Mammary epithelial cell (primary cell): ENCODE measurements at regions of chr10 and their contacts with region 1.

Region 1: GRCh38 chr10:49606981-49607535 is 3.1 kb upstream of the SLC18A3 start:
- DNase-seq: peak; percentile 54
- H3K4me3 ChIP-seq: no peak overlapping the region
- H3K27ac ChIP-seq: no peak overlapping the region
- H3K4me1 ChIP-seq: peaks cover 16% of the 10 kb centered on the region
- H3K27me3 ChIP-seq: peaks cover 40% of the 10 kb centered on the region
- CTCF ChIP-seq: no peak

Region 2: DNA sequence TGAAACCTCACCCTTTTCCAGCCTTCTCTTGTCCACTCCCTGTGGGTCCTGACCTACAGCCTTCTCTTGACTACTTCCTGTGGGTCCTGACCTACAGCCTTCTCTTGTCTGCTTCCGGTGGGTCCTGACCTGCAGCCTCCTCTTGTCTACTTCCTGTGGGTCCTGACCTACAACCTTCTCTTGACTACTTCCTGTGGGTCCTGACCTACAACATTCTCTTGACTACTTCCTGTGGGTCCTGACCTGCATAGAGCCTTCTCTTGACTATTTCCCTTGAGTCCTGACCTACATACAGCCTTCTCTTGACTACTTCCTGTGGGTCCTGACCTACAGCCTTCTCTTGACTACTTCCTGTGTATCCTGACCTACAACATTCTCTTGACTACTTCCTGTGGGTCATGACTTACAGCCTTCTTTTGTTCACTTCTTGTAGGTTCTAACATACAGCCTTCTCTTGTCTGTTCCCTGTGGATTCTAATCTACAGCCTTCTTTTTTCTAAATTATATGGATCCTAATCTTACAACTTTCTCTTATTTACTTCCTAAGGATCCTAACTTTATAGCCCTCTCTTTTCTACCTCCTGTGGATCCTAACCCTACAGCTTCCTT is 271.6 kb before region 1 on chr10:
- CTCF ChIA-PET with region 1: no interaction called
- dilution Hi-C with region 1: no loop called
- in situ Hi-C with region 1: no loop called
- intact Hi-C with region 1: no loop called
- DNase-seq: no peak
- H3K4me3 ChIP-seq: no peak overlapping the region
- H3K27ac ChIP-seq: no peak overlapping the region
- H3K4me1 ChIP-seq: no peaks in the 10 kb centered on the region
- H3K27me3 ChIP-seq: no peaks in the 10 kb centered on the region
- CTCF ChIP-seq: no peak

Region 3: GRCh38 chr10:49398000-49398861 is 208.8 kb before region 1 on chr10:
- CTCF ChIA-PET with region 1: no interaction called
- dilution Hi-C with region 1: no loop called
- in situ Hi-C with region 1: no loop called
- intact Hi-C with region 1: loop called (anchors 10 kb)
- DNase-seq: peak; percentile 57
- H3K4me3 ChIP-seq: peak overlapping the region in 2 of 3 experiments; percentile 28 to 30
- H3K27ac ChIP-seq: no peak overlapping the region
- H3K4me1 ChIP-seq: peaks cover 11% of the 10 kb centered on the region
- H3K27me3 ChIP-seq: peaks cover 69% of the 10 kb centered on the region
- CTCF ChIP-seq: no peak

Region 4: DNA sequence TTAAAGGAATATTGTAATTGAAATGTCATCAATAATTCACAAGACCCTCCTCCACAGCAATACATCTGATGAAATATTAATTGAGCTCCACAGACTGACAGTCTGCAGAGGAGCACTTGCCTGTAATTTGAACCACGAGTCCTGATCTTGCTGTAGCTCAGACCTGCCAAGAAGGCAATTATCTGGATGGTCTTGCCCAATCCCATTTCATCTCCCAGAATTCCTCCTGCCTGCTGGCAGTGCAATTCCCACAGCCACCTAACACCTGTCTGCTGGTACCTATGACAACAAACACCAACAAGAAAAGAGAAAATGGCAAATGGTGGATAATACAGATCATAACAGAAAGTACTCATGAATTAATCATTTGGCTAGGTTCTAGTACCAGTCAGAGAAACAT is 106.6 kb before region 1 on chr10:
- CTCF ChIA-PET with region 1: no interaction called
- dilution Hi-C with region 1: no loop called
- in situ Hi-C with region 1: no loop called
- intact Hi-C with region 1: no loop called
- DNase-seq: no peak
- H3K4me3 ChIP-seq: no peak overlapping the region
- H3K27ac ChIP-seq: no peak overlapping the region
- H3K4me1 ChIP-seq: no peaks in the 10 kb centered on the region
- H3K27me3 ChIP-seq: no peaks in the 10 kb centered on the region
- CTCF ChIP-seq: no peak

Region 5: GRCh38 chr10:49645417-49646255 is 38.6 kb after region 1 on chr10:
- CTCF ChIA-PET with region 1: no interaction called
- dilution Hi-C with region 1: no loop called
- in situ Hi-C with region 1: no loop called
- intact Hi-C with region 1: no loop called
- DNase-seq: no peak
- H3K4me3 ChIP-seq: no peak overlapping the region
- H3K27ac ChIP-seq: no peak overlapping the region
- H3K4me1 ChIP-seq: no peaks in the 10 kb centered on the region
- H3K27me3 ChIP-seq: peaks cover 6% of the 10 kb centered on the region
- CTCF ChIP-seq: no peak

Region 6: GRCh38 chr10:49679480-49679893 is 72.4 kb after region 1 on chr10 and contains the start of gene C10orf53:
- CTCF ChIA-PET with region 1: no interaction called
- dilution Hi-C with region 1: no loop called
- in situ Hi-C with region 1: no loop called
- intact Hi-C with region 1: no loop called
- DNase-seq: peak; percentile 68
- H3K4me3 ChIP-seq: no peak within 1 kb of the TSS
- H3K27ac ChIP-seq: no peak within 1 kb of the TSS
- H3K4me1 ChIP-seq: peaks cover 4% of the 10 kb centered on the region
- H3K27me3 ChIP-seq: no peaks in the 10 kb centered on the region
- CTCF ChIP-seq: no peak
- total RNA-seq, gene C10orf53: not detected

Region 7: DNA sequence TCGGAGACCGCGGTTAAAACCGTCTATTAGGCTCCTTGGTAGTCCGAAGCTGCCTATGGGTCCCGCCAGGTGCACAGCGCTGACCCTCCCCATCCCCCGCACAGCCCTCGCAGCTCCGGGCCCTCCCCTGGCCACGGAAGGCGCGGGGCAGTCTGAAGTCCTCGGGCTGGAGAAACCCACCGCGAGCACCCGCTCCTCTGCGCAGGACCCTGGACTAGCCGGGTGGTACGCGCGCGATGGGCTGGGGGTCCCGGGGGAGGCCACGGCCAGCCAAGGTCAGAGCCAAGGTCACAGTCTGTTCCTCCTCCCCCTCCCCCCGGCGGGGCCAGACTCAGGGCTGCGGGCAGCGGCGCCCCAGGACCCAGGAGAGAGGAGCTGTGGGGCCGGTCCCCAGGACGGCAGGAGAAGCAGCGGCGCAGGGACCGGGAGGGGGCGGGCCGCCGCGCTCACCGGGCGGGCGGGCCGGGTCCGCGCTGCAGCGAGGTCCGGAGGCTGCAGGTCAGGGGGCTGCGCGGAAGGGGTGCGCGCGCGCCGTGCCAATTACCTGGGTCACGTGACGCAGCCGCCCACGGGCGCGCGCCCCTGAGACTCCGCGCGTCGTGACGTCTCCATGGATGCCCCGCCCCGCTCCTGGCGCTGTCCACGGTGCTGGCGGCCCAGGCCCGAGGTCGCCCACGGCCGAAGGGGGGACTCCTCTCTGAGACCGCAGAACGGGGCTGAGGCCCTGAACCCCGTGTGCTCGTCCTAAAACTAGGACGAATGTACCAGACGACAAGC is 154.9 kb after region 1 on chr10 and contains the start of gene OGDHL:
- CTCF ChIA-PET with region 1: no interaction called
- dilution Hi-C with region 1: no loop called
- in situ Hi-C with region 1: no loop called
- intact Hi-C with region 1: loop called (anchors 2 kb)
- DNase-seq: peak; percentile 44
- H3K4me3 ChIP-seq: peak within 1 kb of the TSS; percentile 36 to 52 (median 51)
- H3K27ac ChIP-seq: no peak within 1 kb of the TSS
- H3K4me1 ChIP-seq: no peaks in the 10 kb centered on the region
- H3K27me3 ChIP-seq: no peaks in the 10 kb centered on the region
- CTCF ChIP-seq: no peak
- total RNA-seq, gene OGDHL: 0.33 to 0.40 TPM